Activated CD4-positive, alpha-beta memory T cell treated with anti-CD3 and anti-CD28 coated beads, Interleukin-2, amount 10 ng/mL, durations not matched to agents 7 days and 5 days (primary cell): ENCODE measurements at regions of chr2 and their contacts with region 1.

Region 1: GRCh38 chr2:134232868-134233727 is 20.8 kb upstream of the MGAT5 start:
- DNase-seq: peak; percentile 33
- H3K4me3 Mint-ChIP-seq: peak overlapping the region; percentile 27
- H3K27ac Mint-ChIP-seq: peak overlapping the region; percentile 91
- H3K4me1 Mint-ChIP-seq: peaks cover 75% of the 10 kb centered on the region
- H3K27me3 Mint-ChIP-seq: no peaks in the 10 kb centered on the region

Region 2: GRCh38 chr2:134245340-134245984 is 12.4 kb after region 1 on chr2:
- CTCF ChIA-PET with region 1: interaction called, 43 read pairs
- POLR2A ChIA-PET with region 1: interaction called, 3 read pairs
- DNase-seq: peak; percentile 76
- H3K4me3 Mint-ChIP-seq: no peak overlapping the region
- H3K27ac Mint-ChIP-seq: no peak overlapping the region
- H3K4me1 Mint-ChIP-seq: peaks cover 62% of the 10 kb centered on the region
- H3K27me3 Mint-ChIP-seq: peaks cover 32% of the 10 kb centered on the region